ENCODE measurements at regions of chr17 and their contacts with region 1.

Region 1: DNA sequence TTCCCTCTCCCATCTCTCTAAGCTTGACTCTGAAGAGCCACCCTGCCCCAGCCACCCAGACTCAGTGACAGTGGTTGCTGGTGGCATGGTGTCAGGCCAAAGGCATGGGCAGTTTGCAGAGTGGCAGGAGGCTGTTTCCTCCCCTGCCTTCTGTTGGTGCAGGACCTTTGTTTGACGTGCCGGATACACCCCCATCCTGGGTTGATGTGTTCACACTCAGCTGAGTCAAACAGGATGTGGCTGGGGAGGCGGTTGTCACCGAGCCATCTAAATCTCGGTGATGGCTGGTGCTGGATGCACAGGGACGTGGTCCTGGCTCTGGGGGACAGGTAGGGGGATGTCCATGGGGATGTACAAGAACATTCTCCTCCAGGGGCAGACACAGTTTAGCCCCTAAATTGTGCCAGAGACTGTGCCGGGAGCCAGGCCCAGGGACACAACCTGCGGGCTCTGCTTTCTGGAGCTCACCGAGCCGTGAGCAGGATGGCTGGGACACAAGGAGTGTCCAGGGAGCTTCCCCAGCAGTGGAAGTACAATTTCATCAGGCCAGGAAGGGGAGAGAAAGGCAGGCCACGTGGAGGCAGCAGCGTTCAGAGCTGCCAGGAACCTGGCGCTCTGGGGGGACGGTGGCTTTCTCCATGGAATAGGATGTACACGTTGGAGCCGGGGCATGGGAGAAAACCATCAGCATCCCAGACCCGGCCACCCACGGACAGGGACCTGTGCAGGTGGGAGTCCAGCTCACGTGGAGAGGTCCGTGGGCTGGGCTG is 264.2 kb downstream of the SEC14L1 start:
- DNase-seq: peak; percentile 78 to 92 (median 83)
- H3K4me3 ChIP-seq: peak overlapping the region; percentile 59 to 88
- H3K4me3 Mint-ChIP-seq: peak overlapping the region; percentile 94 to 99 (median 96)
- H3K27ac ChIP-seq: peak overlapping the region; percentile 87
- H3K27ac Mint-ChIP-seq: peak overlapping the region; percentile 96 to 100 (median 98)
- H3K4me1 ChIP-seq: peaks cover 97% of the 10 kb centered on the region
- H3K4me1 Mint-ChIP-seq: peaks cover 59 to 100% (median 81%) of the 10 kb centered on the region in 4 donors
- H3K27me3 ChIP-seq: no peaks in the 10 kb centered on the region
- H3K27me3 Mint-ChIP-seq: no peaks in the 10 kb centered on the region

Region 2: DNA sequence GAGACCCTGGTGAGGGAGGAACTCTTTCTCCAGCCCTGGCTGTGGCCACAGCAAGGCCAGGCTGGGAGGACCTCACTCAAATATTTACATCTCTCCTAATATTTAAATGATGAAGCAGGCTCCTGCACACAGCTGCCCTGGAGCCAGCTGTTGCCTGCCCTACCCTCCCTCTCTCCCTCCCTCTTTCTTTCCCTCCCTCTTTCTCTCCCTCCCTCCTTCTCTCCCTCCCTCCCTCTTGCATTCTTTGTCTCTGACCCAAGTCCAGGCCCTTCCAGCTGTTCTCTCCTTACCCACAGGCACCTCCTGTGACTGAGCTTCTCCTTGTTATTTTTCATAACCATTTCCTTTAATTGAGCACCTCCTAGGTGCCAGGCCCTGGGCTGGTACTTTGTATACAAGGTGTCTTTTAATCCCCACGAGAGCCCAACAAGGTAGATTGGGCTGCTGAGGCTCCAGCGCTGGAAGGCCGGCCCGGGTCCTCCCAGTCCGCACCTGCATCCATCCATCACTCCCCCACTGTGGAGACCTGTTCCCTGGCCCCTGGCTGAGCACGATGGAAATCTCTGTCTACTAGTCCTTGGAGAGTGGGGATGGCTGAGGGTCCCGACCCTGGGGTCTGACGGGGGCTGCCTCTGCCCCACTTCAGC is 21.9 kb before region 1 on chr17:
- CTCF ChIA-PET with region 1: interaction called, 97 read pairs
- POLR2A ChIA-PET with region 1: interaction called, 6,031 read pairs
- intact Hi-C with region 1: loop called (anchors 2 kb)
- DNase-seq: no peak
- H3K4me3 ChIP-seq: peak overlapping the region in 1 of 2 donors; percentile 41
- H3K4me3 Mint-ChIP-seq: peak overlapping the region; percentile 74 to 94 (median 82)
- H3K27ac ChIP-seq: peak overlapping the region; percentile 50
- H3K27ac Mint-ChIP-seq: peak overlapping the region; percentile 82 to 95 (median 90)
- H3K4me1 ChIP-seq: peaks cover 98% of the 10 kb centered on the region
- H3K4me1 Mint-ChIP-seq: peaks cover 56 to 97% (median 84%) of the 10 kb centered on the region in 4 donors
- H3K27me3 ChIP-seq: no peaks in the 10 kb centered on the region
- H3K27me3 Mint-ChIP-seq: no peaks in the 10 kb centered on the region

Region 3: DNA sequence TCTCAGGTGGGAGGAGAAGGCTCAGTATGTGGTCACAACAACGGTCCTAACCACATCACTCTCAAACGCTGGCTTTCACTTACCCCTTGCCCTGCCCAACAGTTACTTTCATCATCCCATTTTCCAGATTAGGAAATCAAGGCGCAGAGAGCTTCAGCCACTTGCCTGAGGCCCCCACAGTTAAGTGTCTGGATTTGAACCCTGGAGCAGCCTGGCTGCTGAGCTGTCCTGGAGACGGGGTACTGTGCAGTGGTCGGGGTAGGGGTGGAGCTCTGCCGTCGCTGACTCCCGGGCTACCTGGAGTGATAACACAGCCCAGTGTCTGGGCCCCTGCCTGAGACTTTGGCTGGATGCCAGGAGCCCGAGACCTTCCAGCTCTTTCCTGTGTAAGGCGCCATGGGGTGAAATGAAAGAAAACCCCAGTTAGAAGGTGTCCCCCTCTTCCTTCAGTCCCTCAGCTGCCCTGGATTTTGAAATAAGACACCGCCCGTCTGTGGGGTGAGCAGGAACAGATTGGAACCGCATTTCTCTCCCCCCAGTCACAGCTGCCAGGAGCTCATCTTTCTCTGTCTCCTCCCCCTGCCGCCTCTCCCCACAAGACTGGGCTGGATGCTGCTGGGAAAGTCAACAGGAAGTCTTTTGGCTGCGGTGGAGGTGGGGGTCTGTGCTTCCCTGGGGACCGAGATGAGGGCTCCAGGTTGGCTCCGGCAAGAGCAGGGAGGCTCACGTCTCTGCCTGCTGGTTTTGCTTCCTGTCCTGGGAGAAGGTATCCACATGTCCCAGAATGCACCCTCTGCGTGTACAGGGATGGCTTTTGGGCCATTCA is 16.0 kb after region 1 on chr17:
- CTCF ChIA-PET with region 1: interaction called, 48 read pairs
- POLR2A ChIA-PET with region 1: interaction called, 6,031 read pairs
- intact Hi-C with region 1: loop called (anchors 2 kb)
- DNase-seq: peak; percentile 56 to 83 (median 62)
- H3K4me3 ChIP-seq: peak overlapping the region in 1 of 2 donors; percentile 43
- H3K4me3 Mint-ChIP-seq: peak overlapping the region; percentile 72 to 84 (median 78)
- H3K27ac ChIP-seq: peak overlapping the region; percentile 64
- H3K27ac Mint-ChIP-seq: peak overlapping the region; percentile 93 to 96 (median 96)
- H3K4me1 ChIP-seq: peaks cover 98% of the 10 kb centered on the region
- H3K4me1 Mint-ChIP-seq: peaks cover 27 to 81% (median 49%) of the 10 kb centered on the region in 4 donors
- H3K27me3 ChIP-seq: no peaks in the 10 kb centered on the region
- H3K27me3 Mint-ChIP-seq: no peaks in the 10 kb centered on the region

Region 4: DNA sequence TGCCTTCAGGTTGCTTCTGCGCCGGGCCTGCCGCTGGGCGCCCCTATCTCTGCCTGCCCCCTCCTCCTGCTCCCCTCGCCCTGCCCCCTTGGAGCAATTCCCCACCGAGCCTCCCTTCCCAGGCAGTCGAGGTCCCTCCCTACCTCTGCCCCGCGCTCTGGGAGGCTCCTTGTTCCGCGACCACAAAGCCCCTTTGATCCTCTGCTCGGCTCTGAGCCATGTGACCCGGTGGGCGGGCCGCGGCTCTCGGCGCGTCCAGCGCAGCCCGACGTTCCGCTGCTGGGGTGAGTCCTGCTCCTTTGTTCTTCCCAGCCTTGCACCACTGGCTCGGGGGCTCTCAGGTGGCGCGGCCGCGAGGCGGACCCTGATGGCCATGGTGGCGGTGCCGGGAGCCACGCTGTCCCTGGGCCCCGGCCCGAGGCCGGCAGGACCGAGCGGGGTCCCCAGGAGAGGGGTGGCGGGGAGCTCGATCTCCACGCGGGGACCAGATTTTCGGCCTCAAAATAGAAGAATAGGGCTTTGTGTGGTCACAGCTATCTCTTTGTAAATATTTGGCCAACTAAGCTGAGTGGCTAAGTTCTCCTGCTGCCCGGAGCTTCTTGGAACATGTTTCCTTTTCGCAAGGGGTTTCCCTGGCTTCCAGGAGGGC is 46.4 kb after region 1 on chr17:
- CTCF ChIA-PET with region 1: interaction called, 22 read pairs
- POLR2A ChIA-PET with region 1: interaction called, 6,031 read pairs
- intact Hi-C with region 1: loop called (anchors 5 kb)
- DNase-seq: peak; percentile 65 to 83 (median 73)
- H3K4me3 ChIP-seq: peak overlapping the region; percentile 94 to 96
- H3K4me3 Mint-ChIP-seq: peak overlapping the region; percentile 90 to 100 (median 96)
- H3K27ac ChIP-seq: peak overlapping the region; percentile 73
- H3K27ac Mint-ChIP-seq: peak overlapping the region; percentile 81 to 100 (median 98)
- H3K4me1 ChIP-seq: peaks cover 61% of the 10 kb centered on the region
- H3K4me1 Mint-ChIP-seq: peaks cover 25 to 91% (median 45%) of the 10 kb centered on the region in 4 donors
- H3K27me3 ChIP-seq: no peaks in the 10 kb centered on the region
- H3K27me3 Mint-ChIP-seq: no peaks in the 10 kb centered on the region

Region 5: DNA sequence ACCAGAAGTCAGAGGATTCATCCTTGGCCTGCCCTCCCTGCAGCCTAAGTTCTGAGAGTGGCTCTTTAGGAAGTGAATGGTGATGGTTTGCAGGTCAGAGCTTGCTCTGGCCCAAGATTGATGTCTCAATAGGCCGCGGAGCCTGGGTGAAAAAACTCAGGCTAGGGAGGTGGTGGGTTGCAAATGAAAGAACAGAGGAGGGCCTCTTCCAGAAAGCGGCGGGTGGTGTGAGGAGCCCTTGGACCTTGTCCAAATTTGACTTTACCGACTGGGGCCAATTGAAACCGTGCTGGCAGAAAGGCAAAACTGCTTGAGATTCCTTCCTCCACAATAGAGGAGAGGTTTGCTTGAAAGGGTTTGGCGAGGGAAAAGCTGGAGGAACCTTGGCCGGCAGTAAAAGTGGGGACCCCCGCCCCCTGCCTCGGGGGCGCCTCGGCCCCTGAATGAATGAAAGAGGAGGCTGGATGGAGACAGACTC is 67.0 kb after region 1 on chr17:
- CTCF ChIA-PET with region 1: interaction called, 7 read pairs
- POLR2A ChIA-PET with region 1: interaction called, 6,031 read pairs
- intact Hi-C with region 1: no loop called
- DNase-seq: peak in 1 of 5 donors; percentile 34
- H3K4me3 ChIP-seq: peak overlapping the region; percentile 18 to 48
- H3K4me3 Mint-ChIP-seq: peak overlapping the region; percentile 43 to 91 (median 74)
- H3K27ac ChIP-seq: peak overlapping the region; percentile 51
- H3K27ac Mint-ChIP-seq: peak overlapping the region; percentile 82 to 98 (median 93)
- H3K4me1 ChIP-seq: peaks cover 100% of the 10 kb centered on the region
- H3K4me1 Mint-ChIP-seq: peaks cover 67 to 99% (median 90%) of the 10 kb centered on the region in 4 donors
- H3K27me3 ChIP-seq: no peaks in the 10 kb centered on the region
- H3K27me3 Mint-ChIP-seq: no peaks in the 10 kb centered on the region